ENCODE measurements at regions of chr17 and their contacts with region 1.

Region 1: GRCh38 chr17:38584350-38584925 is 21.3 kb downstream of the SRCIN1 start:
- DNase-seq: peak; percentile 65
- ATAC-seq: peak; percentile 72
- H3K4me3 Mint-ChIP-seq: no peak overlapping the region
- H3K27ac Mint-ChIP-seq: no peak overlapping the region
- H3K4me1 Mint-ChIP-seq: peaks cover 30% of the 10 kb centered on the region
- H3K27me3 Mint-ChIP-seq: peaks cover 70% of the 10 kb centered on the region

Region 2: DNA sequence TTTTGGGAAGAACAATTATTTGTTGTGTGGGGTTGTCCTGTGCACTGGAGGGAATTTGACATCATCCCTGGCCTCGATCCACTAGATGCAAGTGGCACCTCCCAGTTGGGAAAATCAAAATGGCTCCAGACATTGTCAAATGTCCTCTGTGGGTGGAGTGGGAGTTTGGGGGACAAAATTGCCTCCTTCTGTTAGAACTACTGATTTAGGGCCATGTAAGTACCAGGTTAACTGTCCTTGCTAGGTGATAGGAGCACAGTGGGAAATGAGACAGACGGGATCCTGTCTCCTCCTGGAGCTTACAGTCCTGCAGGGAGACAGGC is 99.3 kb before region 1 on chr17:
- CTCF ChIA-PET with region 1: no interaction called
- POLR2A ChIA-PET with region 1: no interaction called
- DNase-seq: no peak
- ATAC-seq: no peak
- H3K4me3 Mint-ChIP-seq: no peak overlapping the region
- H3K27ac Mint-ChIP-seq: no peak overlapping the region
- H3K4me1 Mint-ChIP-seq: peaks cover 5% of the 10 kb centered on the region
- H3K27me3 Mint-ChIP-seq: peaks cover 10% of the 10 kb centered on the region

Region 3: DNA sequence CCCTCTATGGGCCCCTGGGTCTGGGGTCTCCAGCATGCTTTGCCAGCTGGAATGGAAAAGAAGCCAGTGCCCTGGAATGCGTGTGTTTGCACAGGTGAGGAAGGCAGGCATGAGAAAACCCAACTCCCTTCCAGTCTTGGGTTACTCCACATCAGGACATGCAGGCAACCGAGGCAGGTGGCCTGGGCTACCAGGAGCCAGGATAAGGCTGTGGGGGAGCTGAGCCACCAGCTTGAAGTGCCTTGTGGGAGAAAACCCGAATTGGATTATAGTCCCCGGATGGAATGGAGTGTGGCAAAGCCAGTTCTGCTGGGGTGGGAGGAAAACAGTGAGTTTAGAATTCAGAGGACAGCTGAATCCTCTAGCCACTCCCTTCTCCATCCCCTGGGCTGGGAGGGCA is 14.1 kb after region 1 on chr17:
- CTCF ChIA-PET with region 1: interaction called, 13 read pairs
- POLR2A ChIA-PET with region 1: no interaction called
- DNase-seq: peak; percentile 45
- ATAC-seq: peak; percentile 46
- H3K4me3 Mint-ChIP-seq: no peak overlapping the region
- H3K27ac Mint-ChIP-seq: no peak overlapping the region
- H3K4me1 Mint-ChIP-seq: peaks cover 23% of the 10 kb centered on the region
- H3K27me3 Mint-ChIP-seq: peaks cover 73% of the 10 kb centered on the region

Region 4: GRCh38 chr17:38605888-38606645 is 21.6 kb after region 1 on chr17 and contains the start of gene SRCIN1:
- CTCF ChIA-PET with region 1: interaction called, 12 read pairs
- POLR2A ChIA-PET with region 1: no interaction called
- DNase-seq: peak; percentile 61
- ATAC-seq: peak; percentile 50
- H3K4me3 Mint-ChIP-seq: peak within 1 kb of the TSS; percentile 63
- H3K27ac Mint-ChIP-seq: no peak within 1 kb of the TSS
- H3K4me1 Mint-ChIP-seq: peaks cover 19% of the 10 kb centered on the region
- H3K27me3 Mint-ChIP-seq: peaks cover 67% of the 10 kb centered on the region
- total RNA-seq, gene SRCIN1: 0.34 TPM in 1 of 2 experiments, not detected in the other

Region 5: DNA sequence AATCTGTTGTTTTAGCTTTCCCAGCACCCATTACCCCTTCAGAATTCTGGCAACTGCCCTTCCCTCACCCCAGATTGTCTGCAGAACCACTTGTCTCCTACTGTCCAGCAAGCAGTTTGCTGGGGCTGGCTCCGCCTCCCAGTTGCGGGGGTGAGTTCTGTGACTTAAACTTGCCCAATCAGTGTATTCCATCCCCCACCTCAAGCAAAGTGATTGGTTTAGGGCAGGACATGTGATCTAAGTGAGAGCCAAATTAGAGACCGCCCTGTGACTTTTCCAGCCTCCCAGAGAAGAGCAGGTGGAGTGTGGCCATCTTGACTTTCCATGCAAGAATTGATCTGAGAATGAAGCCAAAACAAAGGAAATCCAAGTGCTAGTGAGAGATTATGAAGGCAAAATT is 44.0 kb after region 1 on chr17:
- CTCF ChIA-PET with region 1: no interaction called
- POLR2A ChIA-PET with region 1: no interaction called
- DNase-seq: no peak
- ATAC-seq: no peak
- H3K4me3 Mint-ChIP-seq: no peak overlapping the region
- H3K27ac Mint-ChIP-seq: no peak overlapping the region
- H3K4me1 Mint-ChIP-seq: peaks cover 4% of the 10 kb centered on the region
- H3K27me3 Mint-ChIP-seq: peaks cover 15% of the 10 kb centered on the region

Region 6: DNA sequence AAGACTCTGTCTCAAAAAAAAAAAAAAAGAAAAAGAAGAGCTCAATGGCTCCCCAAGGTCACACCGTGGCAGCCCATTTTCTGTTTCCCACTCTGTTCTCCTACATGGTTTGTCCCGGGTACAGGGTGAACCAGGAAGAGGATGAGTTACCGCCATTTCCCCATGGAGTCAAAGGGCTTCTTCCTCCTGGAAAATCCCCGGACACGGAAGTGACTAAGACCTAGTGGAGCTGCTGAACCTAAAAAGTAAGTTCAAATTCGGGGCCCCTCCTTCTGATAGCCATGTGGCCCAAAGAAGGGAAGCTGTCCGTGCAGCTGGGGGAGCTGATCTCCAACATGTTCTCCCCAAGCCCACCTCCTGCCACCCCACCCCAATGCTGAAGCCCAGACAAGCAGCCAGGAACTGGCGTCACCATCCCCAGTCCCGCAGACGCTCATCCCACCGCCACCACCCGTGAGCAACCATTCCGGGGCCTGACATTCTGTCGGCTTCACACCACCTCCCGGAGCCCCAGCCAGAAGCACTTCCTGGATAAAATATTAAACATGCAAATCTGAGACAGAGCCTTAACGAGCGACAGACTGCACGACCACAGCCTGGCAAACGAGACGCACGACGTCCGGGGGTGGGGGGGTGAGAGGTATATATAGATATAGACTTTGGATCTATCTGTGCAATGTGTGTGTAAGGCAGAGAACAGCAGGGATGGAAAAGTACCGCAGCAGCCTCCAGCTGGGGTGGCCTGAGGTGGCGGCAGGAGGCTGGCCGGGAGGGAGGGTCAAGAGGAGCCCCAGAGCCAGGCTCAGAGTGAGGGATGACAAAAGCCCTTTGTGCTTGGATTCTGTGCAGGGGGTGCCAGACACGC is 72.8 kb after region 1 on chr17:
- CTCF ChIA-PET with region 1: no interaction called
- POLR2A ChIA-PET with region 1: no interaction called
- DNase-seq: no peak
- ATAC-seq: no peak
- H3K4me3 Mint-ChIP-seq: no peak overlapping the region
- H3K27ac Mint-ChIP-seq: no peak overlapping the region
- H3K4me1 Mint-ChIP-seq: peaks cover 27% of the 10 kb centered on the region
- H3K27me3 Mint-ChIP-seq: peaks cover 16% of the 10 kb centered on the region

Region 7: GRCh38 chr17:38693700-38694329 is 109.4 kb after region 1 on chr17:
- CTCF ChIA-PET with region 1: no interaction called
- POLR2A ChIA-PET with region 1: no interaction called
- DNase-seq: no peak
- ATAC-seq: no peak
- H3K4me3 Mint-ChIP-seq: no peak overlapping the region
- H3K27ac Mint-ChIP-seq: no peak overlapping the region
- H3K4me1 Mint-ChIP-seq: peaks cover 26% of the 10 kb centered on the region
- H3K27me3 Mint-ChIP-seq: no peaks in the 10 kb centered on the region

Measured in activated CD8-positive, alpha-beta T cell treated with anti-CD3 and anti-CD28 coated beads, Interleukin-2, amount 10 ng/mL, durations not matched to agents 7 days and 5 days (primary cell).